Ovary (tissue), 10 donors: ENCODE measurements at regions of chr10 and their contacts with region 1.

Region 1: GRCh38 chr10:27558612-27559020 is 54.5 kb downstream of the RAB18 start:
- DNase-seq: peak; percentile 51 to 70 (median 60)
- H3K4me3 ChIP-seq: no peak overlapping the region
- H3K27ac ChIP-seq: no peak overlapping the region
- H3K4me1 ChIP-seq: no peaks in the 10 kb centered on the region
- H3K27me3 ChIP-seq: no peaks in the 10 kb centered on the region
- CTCF ChIP-seq: peak; percentile 68 to 76 (median 73)
- EP300 ChIP-seq: no peak
- POLR2A ChIP-seq: no peak

Region 2: DNA sequence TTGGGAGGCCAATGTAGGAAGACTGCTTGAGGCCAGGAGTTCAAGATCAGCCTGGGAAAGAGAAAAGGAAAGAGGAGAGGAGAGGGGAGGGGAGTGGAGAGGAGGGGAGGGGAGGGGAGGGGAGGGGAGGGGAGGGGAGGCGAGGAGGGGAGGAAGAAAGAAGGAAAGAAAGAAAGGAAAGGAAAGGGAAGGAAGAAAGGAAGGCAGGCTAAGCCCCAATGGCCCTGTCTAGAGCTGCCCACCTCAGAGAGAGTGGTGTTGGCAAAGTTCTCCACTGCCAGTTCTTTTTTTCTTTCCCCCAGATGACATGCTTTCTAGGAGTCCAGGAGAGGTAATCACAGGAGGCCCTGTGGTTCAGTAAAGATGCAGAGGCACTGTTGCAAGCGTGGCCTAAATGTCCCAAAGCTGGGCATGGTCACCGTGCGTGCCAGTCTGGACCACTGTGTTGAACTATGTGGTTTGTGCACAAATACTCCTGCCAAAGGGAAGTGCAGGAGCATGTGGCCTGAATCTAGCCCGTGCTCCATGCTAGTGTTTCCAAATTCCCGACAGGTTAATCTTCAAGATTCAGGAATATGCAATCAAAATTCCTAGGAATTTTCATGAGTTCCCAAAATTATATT is 400.6 kb after region 1 on chr10:
- intact Hi-C with region 1: no loop called
- DNase-seq: no peak
- H3K4me3 ChIP-seq: no peak overlapping the region
- H3K27ac ChIP-seq: no peak overlapping the region
- H3K4me1 ChIP-seq: no peaks in the 10 kb centered on the region
- H3K27me3 ChIP-seq: no peaks in the 10 kb centered on the region
- CTCF ChIP-seq: no peak
- EP300 ChIP-seq: no peak
- POLR2A ChIP-seq: no peak

Region 3: DNA sequence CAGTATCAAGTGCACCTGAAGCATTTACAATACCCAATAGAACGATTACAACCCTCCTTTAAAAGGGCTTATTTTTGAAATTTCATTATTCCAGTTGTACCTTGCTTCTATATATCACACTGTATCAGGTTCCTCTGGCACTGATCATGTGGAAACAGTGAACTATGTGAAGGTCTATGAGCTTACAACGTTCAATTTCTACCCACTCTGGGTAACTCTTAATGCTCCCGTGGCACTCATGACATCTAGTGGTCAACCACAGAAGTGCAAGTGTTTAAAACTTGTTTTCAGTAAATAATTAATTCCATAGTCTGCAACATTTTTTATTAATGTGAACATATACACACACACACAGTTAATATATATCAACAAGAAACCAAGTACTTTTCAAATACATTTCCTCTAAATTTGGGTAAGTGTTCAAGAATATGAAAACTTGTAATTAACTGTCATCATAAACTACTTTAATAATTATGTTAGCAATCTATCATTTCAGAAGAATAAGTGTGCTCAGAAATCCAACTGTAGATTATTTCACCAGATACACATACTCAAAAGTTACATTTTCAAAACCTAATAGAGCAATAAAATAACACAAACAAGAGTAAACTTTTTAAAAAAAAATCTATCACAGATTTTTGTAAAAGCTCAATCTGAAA is 683.3 kb after region 1 on chr10:
- intact Hi-C with region 1: loop called in 2 of 4 experiments (anchors 5 to 10 kb)
- DNase-seq: peak in 1 of 5 donors; percentile 46
- H3K4me3 ChIP-seq: no peak overlapping the region
- H3K27ac ChIP-seq: no peak overlapping the region
- H3K4me1 ChIP-seq: no peaks in the 10 kb centered on the region
- H3K27me3 ChIP-seq: no peaks in the 10 kb centered on the region
- CTCF ChIP-seq: peak; percentile 89 to 92 (median 91)
- EP300 ChIP-seq: no peak
- POLR2A ChIP-seq: no peak